Mammary epithelial cell (primary cell): ENCODE measurements at regions of chr12 and their contacts with region 1.

Region 1: GRCh38 chr12:54279866-54280467 is at the start of gene CBX5:
- DNase-seq: peak; percentile 97
- H3K4me3 ChIP-seq: peak within 1 kb of the TSS; percentile 72 to 93 (median 83)
- H3K27ac ChIP-seq: peak within 1 kb of the TSS; percentile 98
- H3K4me1 ChIP-seq: peaks cover 17% of the 10 kb centered on the region
- H3K27me3 ChIP-seq: no peaks in the 10 kb centered on the region
- CTCF ChIP-seq: no peak
- total RNA-seq, gene CBX5: 37.2 to 68.1 TPM

Region 2: DNA sequence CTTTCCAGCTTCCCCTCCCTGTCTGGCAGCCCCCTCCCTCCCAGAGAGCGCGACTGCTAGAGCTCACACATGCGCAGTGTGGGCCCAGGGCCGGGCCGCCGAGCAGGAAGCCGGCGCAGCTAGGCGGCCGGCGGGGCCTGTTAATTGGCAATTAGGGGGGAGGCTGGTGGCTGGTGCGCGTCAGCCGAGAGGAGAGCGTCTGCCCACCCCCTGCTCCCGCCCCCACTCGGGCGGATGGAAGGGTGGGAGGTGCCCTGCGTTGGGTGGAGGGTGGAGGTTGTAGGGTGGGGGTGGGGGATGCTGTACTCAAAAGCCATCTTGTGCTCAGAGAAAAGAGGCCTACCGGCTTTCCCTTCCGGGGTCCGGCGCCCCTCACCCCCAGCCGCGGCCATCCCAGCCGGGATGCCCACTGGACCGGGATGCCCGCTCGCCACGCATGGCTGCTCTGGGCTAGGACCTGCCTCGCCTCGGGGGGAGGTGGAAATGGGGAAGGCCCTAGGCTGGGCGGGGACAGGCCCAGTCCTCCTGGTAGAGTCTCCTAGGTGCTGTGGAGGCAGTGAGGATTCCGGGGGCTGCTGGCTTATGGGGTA is 262.0 kb before region 1 on chr12:
- CTCF ChIA-PET with region 1: no interaction called
- dilution Hi-C with region 1: no loop called
- in situ Hi-C with region 1: no loop called
- intact Hi-C with region 1: loop called (anchors 2 kb)
- DNase-seq: peak; percentile 93
- H3K4me3 ChIP-seq: peak overlapping the region; percentile 63 to 87 (median 69)
- H3K27ac ChIP-seq: peak overlapping the region; percentile 90
- H3K4me1 ChIP-seq: peaks cover 49% of the 10 kb centered on the region
- H3K27me3 ChIP-seq: no peaks in the 10 kb centered on the region
- CTCF ChIP-seq: no peak

Region 3: GRCh38 chr12:54220092-54220557 is 59.8 kb before region 1 on chr12:
- CTCF ChIA-PET with region 1: no interaction called
- dilution Hi-C with region 1: no loop called
- in situ Hi-C with region 1: no loop called
- intact Hi-C with region 1: loop called (anchors 1 kb)
- DNase-seq: peak; percentile 79
- H3K4me3 ChIP-seq: no peak overlapping the region
- H3K27ac ChIP-seq: no peak overlapping the region
- H3K4me1 ChIP-seq: peaks cover 44% of the 10 kb centered on the region
- H3K27me3 ChIP-seq: no peaks in the 10 kb centered on the region
- CTCF ChIP-seq: peak; percentile 79 to 86

Region 4: DNA sequence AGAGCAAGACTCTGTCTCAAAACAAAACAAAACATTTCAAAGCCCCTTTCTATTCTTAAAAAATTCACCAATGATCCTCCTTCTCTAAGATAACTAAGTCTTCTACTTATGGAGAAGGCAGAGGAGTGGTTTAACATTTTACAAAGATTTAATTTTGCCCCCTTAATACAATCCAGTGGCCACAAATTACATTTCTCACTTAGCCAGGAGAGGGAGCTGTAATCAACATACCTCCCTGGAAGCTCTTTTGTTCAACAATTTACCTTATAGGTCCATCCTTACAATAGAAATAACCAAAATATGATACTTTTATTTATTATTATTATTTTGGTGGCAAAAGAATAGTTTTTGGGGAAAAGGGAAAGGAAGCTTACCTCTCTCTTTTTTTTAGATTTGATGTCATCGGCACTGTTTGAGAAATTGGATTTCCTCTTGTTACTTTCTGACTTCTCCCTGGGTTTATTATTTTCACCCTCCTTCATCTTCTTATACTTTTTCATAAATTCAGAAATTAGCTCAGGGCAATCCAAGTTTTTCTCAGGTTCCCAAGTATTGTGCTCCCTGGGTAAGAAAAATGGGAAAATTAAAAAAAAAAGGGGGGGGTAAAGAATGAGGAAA is 28.2 kb before region 1 on chr12:
- CTCF ChIA-PET with region 1: interaction called, 6 read pairs
- dilution Hi-C with region 1: no loop called
- in situ Hi-C with region 1: no loop called
- intact Hi-C with region 1: loop called (anchors 1 kb)
- DNase-seq: no peak
- H3K4me3 ChIP-seq: no peak overlapping the region
- H3K27ac ChIP-seq: no peak overlapping the region
- H3K4me1 ChIP-seq: no peaks in the 10 kb centered on the region
- H3K27me3 ChIP-seq: no peaks in the 10 kb centered on the region
- CTCF ChIP-seq: peak; percentile 68 to 76

Region 5: GRCh38 chr12:54259194-54260011 is 20.6 kb before region 1 on chr12:
- CTCF ChIA-PET with region 1: interaction called, 6 read pairs
- dilution Hi-C with region 1: no loop called
- in situ Hi-C with region 1: no loop called
- intact Hi-C with region 1: loop called (anchors 1 kb)
- DNase-seq: peak; percentile 77
- H3K4me3 ChIP-seq: peak overlapping the region; percentile 6 to 39 (median 33)
- H3K27ac ChIP-seq: peak overlapping the region; percentile 91
- H3K4me1 ChIP-seq: peaks cover 36% of the 10 kb centered on the region
- H3K27me3 ChIP-seq: no peaks in the 10 kb centered on the region
- CTCF ChIP-seq: no peak

Region 6: DNA sequence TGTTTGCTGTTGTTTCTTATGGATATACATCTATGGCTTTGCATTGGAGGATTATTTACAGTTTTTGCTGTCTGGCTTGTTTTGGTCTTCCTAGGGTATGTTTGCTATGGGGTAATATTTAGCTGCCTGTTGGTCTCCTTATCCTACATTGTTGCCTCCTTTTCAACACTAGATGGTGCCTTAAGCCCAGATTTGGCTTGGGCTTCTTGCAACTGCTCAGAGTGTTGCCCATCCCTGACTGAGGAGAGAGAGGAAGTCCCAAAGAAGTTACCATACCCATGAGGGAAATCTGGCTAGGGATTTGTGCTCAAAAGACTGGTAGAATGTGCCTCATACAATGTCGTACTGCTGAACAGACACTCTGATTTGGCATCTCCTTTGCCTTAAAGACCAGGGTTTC is 479.8 kb after region 1 on chr12:
- CTCF ChIA-PET with region 1: no interaction called
- dilution Hi-C with region 1: no loop called
- in situ Hi-C with region 1: no loop called
- intact Hi-C with region 1: no loop called
- DNase-seq: peak; percentile 52
- H3K4me3 ChIP-seq: no peak overlapping the region
- H3K27ac ChIP-seq: no peak overlapping the region
- H3K4me1 ChIP-seq: no peaks in the 10 kb centered on the region
- H3K27me3 ChIP-seq: no peaks in the 10 kb centered on the region
- CTCF ChIP-seq: peak; percentile 43 to 70